ENCODE measurements at regions of chr1 and their contacts with region 1.

Region 1: GRCh38 chr1:162056043-162056442 is 13.4 kb upstream of the NOS1AP start:
- DNase-seq: peak; percentile 56 to 66 (median 61)
- ATAC-seq: peak; percentile 77 to 94 (median 92)
- H3K4me3 ChIP-seq: no peak overlapping the region
- H3K27ac ChIP-seq: no peak overlapping the region
- H3K4me1 ChIP-seq: peaks cover 0 to 6% (median 0%) of the 10 kb centered on the region in 12 donors
- H3K27me3 ChIP-seq: no peaks in the 10 kb centered on the region
- CTCF ChIP-seq: peak; percentile 76 to 92 (median 84)
- POLR2A ChIP-seq: no peak

Region 2: DNA sequence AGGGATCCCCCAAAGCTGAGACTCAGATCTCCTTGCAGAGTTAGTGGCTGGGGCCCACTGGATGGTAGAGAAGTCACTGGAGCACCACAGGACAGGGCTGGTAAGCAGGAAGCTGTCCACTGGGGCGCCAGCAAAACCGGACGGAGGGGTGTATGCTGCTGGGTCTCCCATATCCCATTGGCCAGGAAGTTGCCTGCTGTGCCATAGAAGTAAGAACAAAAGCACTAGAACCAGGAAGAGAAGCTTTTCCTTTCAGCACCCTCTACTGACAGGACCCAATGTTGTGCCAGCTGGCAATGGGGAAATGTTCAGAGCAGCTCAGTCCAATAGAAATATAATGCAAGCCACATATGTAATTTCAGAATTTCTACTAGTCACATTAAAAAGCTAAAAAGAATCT is 174.1 kb after region 1 on chr1:
- intact Hi-C with region 1: loop called in 2 of 10 experiments (anchors 5 kb)
- DNase-seq: peak in 3 of 5 donors; percentile 29 to 45 (median 41)
- ATAC-seq: peak; percentile 76 to 89 (median 81)
- H3K4me3 ChIP-seq: no peak overlapping the region
- H3K27ac ChIP-seq: peak overlapping the region in 2 of 12 donors; percentile 10 to 35
- H3K4me1 ChIP-seq: peaks cover 0 to 22% (median 0%) of the 10 kb centered on the region in 12 donors
- H3K27me3 ChIP-seq: no peaks in the 10 kb centered on the region
- CTCF ChIP-seq: peak in 7 of 12 donors; percentile 6 to 47 (median 32)
- POLR2A ChIP-seq: no peak

Region 3: GRCh38 chr1:162276493-162276892 is 220.4 kb after region 1 on chr1:
- intact Hi-C with region 1: loop called (anchors 2 to 5 kb)
- DNase-seq: no peak
- ATAC-seq: no peak
- H3K4me3 ChIP-seq: no peak overlapping the region
- H3K27ac ChIP-seq: no peak overlapping the region
- H3K4me1 ChIP-seq: peaks cover 0 to 9% (median 0%) of the 10 kb centered on the region in 12 donors
- H3K27me3 ChIP-seq: peaks cover 0 to 3% (median 0%) of the 10 kb centered on the region in 9 donors
- CTCF ChIP-seq: peak in 10 of 12 donors; percentile 14 to 54 (median 39)
- POLR2A ChIP-seq: no peak

Region 4: DNA sequence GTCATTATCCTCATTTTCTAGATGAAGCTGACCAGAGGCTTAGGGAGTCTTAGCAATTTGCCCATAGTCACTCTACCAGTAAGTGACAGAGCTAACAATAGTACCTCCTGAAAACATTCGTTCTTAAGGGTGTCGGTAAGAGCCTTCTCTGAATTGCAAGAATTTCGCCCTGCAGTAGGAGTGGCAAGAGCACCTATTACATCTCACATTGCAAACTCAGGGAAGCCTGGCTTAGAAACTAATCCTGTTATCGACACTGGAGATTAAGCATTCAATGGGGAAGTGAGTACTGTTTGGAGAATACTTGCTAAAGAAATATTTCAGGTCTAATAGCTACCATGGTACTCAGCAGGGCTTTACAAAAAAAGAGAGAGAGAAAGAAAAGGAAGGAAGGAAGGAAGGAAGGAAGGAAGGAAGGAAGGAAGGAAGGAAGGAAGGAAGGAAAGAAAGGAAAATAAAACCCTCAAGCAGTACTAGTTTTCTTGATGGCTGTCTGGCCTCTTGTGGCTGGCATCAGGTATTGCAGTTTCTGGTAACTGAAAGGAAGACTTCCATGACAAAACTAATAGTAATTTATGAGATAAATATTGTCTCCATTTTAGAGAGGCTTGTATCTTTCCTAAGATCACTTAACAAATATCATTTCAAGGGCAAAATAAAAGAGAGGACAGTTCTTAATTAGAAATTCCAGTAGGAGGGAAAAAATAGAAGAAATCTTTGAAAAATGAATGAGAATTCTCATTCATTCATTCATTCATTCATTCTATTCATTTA is 335.9 kb after region 1 on chr1:
- intact Hi-C with region 1: loop called (anchors 1 to 5 kb)
- DNase-seq: no peak
- ATAC-seq: peak in 1 of 4 donors; percentile 60
- H3K4me3 ChIP-seq: no peak overlapping the region
- H3K27ac ChIP-seq: no peak overlapping the region
- H3K4me1 ChIP-seq: peaks cover 0 to 4% (median 0%) of the 10 kb centered on the region in 12 donors
- H3K27me3 ChIP-seq: peaks cover 0 to 21% (median 0%) of the 10 kb centered on the region in 9 donors
- CTCF ChIP-seq: peak; percentile 67 to 87 (median 78)
- POLR2A ChIP-seq: no peak

Region 5: GRCh38 chr1:162497723-162498500 is 441.9 kb after region 1 on chr1 and contains the start of gene UHMK1:
- intact Hi-C with region 1: loop called in 2 of 10 experiments (anchors 10 kb)
- DNase-seq: peak; percentile 90 to 94 (median 92)
- ATAC-seq: peak; percentile 98 to 100 (median 100)
- H3K4me3 ChIP-seq: peak within 1 kb of the TSS; percentile 74 to 100 (median 96)
- H3K27ac ChIP-seq: peak within 1 kb of the TSS; percentile 89 to 99 (median 95)
- H3K4me1 ChIP-seq: peaks cover 5 to 47% (median 14%) of the 10 kb centered on the region in 12 donors
- H3K27me3 ChIP-seq: no peaks in the 10 kb centered on the region
- CTCF ChIP-seq: no peak
- POLR2A ChIP-seq: peak in 1 of 2 donors; percentile 55
- total RNA-seq, gene UHMK1: 17.2 to 34.5 (median 22.8) TPM

Region 6: DNA sequence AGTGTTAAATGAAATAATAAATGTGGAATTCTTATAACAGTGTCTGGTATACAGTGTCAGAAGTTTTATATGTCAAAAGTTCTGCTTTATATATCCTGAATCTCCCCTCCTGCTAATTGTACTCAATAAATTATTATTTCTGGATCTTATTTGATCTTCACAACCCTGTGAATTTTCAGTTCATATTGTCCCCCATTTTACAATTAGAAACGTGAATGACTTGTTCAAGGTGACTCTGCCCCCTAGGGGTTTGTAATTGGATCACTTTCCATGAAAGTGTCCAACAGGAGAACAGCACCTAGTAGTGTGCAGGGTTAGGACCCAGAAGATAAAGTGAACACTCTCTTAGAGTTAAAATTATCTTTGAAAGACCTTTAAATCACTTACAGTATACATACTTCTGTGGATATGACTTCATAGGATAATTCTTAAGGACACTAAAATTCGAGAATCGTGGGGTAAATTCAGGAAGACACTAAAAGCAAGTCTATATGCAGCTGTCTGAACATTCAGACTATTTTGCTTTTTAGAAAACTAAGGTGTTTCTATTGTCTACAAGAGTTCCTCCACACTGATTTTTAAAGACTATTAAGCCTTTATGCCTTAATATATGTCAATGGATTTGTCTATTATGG is 571.7 kb after region 1 on chr1:
- intact Hi-C with region 1: loop called in 1 of 10 experiments (anchors 10 kb)
- DNase-seq: no peak
- ATAC-seq: no peak
- H3K4me3 ChIP-seq: no peak overlapping the region
- H3K27ac ChIP-seq: peak overlapping the region in 1 of 12 donors; percentile 87
- H3K4me1 ChIP-seq: peaks cover 0 to 37% (median 11%) of the 10 kb centered on the region in 12 donors
- H3K27me3 ChIP-seq: no peaks in the 10 kb centered on the region
- CTCF ChIP-seq: peak in 9 of 12 donors; percentile 5 to 52 (median 30)
- POLR2A ChIP-seq: no peak

Measured in heart left ventricle (tissue), 16 donors.